CD8-positive, alpha-beta memory T cell (primary cell): ENCODE measurements at regions of chr1 and their contacts with region 1.

Region 1: GRCh38 chr1:206734499-206735142 is 36.0 kb upstream of the IL19 start:
- DNase-seq: peak; percentile 66 to 80 (median 74)
- H3K4me3 ChIP-seq: no peak overlapping the region
- H3K4me3 Mint-ChIP-seq: peak overlapping the region in 6 of 7 donors; percentile 7 to 79 (median 54)
- H3K27ac ChIP-seq: no peak overlapping the region
- H3K27ac Mint-ChIP-seq: peak overlapping the region; percentile 86 to 98 (median 92)
- H3K4me1 ChIP-seq: peaks cover 55% of the 10 kb centered on the region
- H3K4me1 Mint-ChIP-seq: peaks cover 60 to 62% (median 62%) of the 10 kb centered on the region in 3 donors
- H3K27me3 ChIP-seq: no peaks in the 10 kb centered on the region
- H3K27me3 Mint-ChIP-seq: no peaks in the 10 kb centered on the region

Region 2: DNA sequence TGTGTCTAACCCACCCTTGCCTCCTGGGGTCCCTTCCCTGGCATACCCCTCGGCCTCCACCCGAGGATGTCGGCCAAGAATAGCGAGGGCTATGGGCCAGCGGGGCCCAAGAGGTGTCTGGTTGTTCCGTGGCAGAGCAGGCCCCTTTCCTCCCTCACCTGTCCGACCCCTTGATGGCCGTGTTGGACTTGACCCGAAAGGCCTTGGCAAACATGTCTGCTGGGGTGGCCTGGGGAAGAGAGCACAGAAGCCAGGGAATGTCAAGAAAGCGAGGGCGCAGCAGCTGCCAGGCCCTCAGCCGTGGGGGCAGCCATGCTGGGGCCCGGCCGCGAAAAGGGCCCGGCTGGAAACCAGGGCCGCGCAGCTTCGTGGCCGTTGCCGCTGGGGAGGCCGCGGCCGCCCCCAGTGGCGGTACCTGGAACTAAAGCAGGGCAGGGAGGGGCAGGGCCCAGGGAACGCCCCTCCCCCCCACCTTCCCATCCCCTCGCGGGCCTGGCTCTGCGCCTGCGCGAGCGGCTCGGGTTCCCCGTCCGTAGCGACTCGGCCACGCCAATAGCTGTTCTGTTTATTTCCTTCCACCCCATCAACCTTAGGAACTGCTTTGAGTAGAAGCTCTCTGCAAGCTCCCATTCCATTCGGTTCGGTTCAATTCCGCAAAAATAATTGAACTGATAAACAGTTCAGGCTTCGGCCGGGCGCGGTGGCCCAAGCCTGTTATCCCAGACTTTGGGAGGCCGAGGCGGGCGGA is 122.3 kb before region 1 on chr1 and contains the start of gene EIF2D:
- CTCF ChIA-PET with region 1: no interaction called
- POLR2A ChIA-PET with region 1: no interaction called
- DNase-seq: peak; percentile 91 to 95 (median 92)
- H3K4me3 ChIP-seq: peak within 1 kb of the TSS; percentile 98
- H3K4me3 Mint-ChIP-seq: peak within 1 kb of the TSS; percentile 88 to 95 (median 92)
- H3K27ac ChIP-seq: peak within 1 kb of the TSS; percentile 91
- H3K27ac Mint-ChIP-seq: peak within 1 kb of the TSS; percentile 63 to 97 (median 96)
- H3K4me1 ChIP-seq: peaks cover 9% of the 10 kb centered on the region
- H3K4me1 Mint-ChIP-seq: peaks cover 14 to 26% (median 21%) of the 10 kb centered on the region in 3 donors
- H3K27me3 ChIP-seq: no peaks in the 10 kb centered on the region
- H3K27me3 Mint-ChIP-seq: no peaks in the 10 kb centered on the region
- total RNA-seq, gene EIF2D: 82.7 to 88.7 TPM

Region 3: DNA sequence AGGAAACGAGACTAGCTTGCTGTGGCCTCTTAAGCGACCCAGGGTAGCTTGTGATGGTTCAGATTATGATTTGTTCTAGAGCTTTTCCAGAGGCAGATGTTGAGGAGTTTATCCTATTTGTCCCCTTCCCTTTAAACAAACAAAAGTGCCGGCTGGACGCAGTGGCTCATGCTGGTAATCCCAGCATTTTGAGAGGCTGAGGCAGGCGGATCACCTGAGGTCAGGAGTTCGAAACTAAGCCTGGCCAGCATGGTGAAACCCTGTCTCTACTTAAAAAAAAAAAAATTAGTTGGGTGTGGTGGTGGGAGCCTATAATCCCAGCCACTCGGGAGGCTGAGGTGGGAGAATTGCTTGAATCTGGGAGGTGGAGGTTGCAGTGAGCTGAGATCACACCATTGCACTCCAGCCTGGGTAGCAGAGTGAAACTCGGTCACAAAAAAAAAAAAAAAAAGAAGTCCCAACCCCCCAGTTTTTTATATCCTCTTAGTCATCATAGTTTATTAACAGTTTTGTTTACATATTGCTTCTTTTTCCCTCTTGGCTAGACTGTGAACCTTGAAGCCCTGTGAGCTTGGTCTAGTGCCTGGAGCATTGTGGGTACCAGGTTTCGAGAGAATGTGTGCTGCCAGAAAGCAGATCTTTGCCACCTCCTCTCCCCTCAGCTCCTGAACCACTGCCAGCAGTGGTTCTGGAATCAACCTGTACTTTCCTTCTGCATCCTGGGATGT is 20.1 kb before region 1 on chr1:
- CTCF ChIA-PET with region 1: interaction called, 16 read pairs
- POLR2A ChIA-PET with region 1: interaction called, 7 read pairs
- DNase-seq: peak in 4 of 5 donors; percentile 37 to 73 (median 50)
- H3K4me3 ChIP-seq: peak overlapping the region; percentile 11
- H3K4me3 Mint-ChIP-seq: peak overlapping the region; percentile 18 to 85 (median 78)
- H3K27ac ChIP-seq: peak overlapping the region; percentile 10
- H3K27ac Mint-ChIP-seq: peak overlapping the region; percentile 79 to 100 (median 94)
- H3K4me1 ChIP-seq: peaks cover 70% of the 10 kb centered on the region
- H3K4me1 Mint-ChIP-seq: peaks cover 83 to 94% (median 92%) of the 10 kb centered on the region in 3 donors
- H3K27me3 ChIP-seq: no peaks in the 10 kb centered on the region
- H3K27me3 Mint-ChIP-seq: peaks cover 0 to 3% of the 10 kb centered on the region in 2 donors

Region 4: DNA sequence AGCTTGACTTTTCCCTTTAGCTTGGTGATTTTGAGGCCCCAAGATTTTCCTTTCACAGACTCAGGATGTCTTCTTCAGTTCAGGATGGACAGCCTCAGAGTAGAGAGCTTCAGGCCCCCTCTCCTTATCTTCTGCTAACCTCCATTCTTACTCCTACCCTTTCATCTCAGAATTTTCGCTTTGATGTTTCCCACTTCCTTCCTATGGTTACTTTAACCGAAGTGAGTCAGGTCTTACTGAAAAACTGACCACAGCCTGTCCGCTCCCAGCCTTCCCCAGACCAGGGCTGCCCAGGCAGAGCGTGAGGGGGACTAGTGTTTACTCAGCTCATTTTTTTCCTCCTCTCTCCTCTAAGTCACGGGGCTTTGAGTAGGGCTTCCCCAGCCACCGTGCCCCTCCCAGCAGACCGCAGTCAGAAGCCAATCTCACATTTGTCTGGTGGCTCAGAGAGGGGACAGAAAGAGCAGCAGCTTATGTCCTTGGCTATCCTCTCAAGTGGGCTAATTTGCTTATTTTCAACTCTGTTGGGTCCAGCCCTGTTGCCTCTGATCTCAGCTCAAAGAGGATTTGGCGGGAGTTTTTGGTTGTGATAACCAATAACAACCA is 31.7 kb after region 1 on chr1:
- CTCF ChIA-PET with region 1: interaction called, 42 read pairs
- POLR2A ChIA-PET with region 1: interaction called, 4 read pairs
- DNase-seq: peak; percentile 57 to 84 (median 73)
- H3K4me3 ChIP-seq: peak overlapping the region; percentile 7
- H3K4me3 Mint-ChIP-seq: peak overlapping the region; percentile 25 to 82 (median 63)
- H3K27ac ChIP-seq: no peak overlapping the region
- H3K27ac Mint-ChIP-seq: peak overlapping the region; percentile 21 to 98 (median 85)
- H3K4me1 ChIP-seq: peaks cover 61% of the 10 kb centered on the region
- H3K4me1 Mint-ChIP-seq: peaks cover 55 to 78% (median 75%) of the 10 kb centered on the region in 3 donors
- H3K27me3 ChIP-seq: no peaks in the 10 kb centered on the region
- H3K27me3 Mint-ChIP-seq: no peaks in the 10 kb centered on the region

Region 5: DNA sequence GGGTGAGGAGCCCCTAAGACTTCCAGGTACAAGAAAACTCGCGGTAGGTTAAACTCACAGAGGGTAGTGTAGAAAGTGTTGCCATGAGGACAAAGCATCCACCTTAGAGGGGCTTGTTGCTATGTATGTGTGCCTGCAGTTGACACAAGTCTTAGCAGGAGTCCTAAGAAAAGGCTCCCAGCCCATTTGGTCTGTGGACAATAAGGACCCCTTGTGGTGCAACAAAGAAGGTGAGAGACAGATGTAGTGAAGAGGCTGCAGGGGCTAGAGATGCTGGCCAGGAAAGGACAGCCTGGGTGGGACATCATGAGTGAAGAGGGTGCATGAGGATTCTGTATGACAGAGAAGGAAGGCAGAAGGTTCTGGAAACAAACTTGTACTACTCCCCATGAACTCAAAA is 74.0 kb after region 1 on chr1:
- CTCF ChIA-PET with region 1: interaction called, 232 read pairs
- POLR2A ChIA-PET with region 1: interaction called, 13 read pairs
- DNase-seq: peak; percentile 7 to 69 (median 67)
- H3K4me3 ChIP-seq: no peak overlapping the region
- H3K4me3 Mint-ChIP-seq: no peak overlapping the region
- H3K27ac ChIP-seq: no peak overlapping the region
- H3K27ac Mint-ChIP-seq: peak overlapping the region in 7 of 8 donors; percentile 9 to 85 (median 79)
- H3K4me1 ChIP-seq: peaks cover 38% of the 10 kb centered on the region
- H3K4me1 Mint-ChIP-seq: peaks cover 31 to 46% (median 43%) of the 10 kb centered on the region in 3 donors
- H3K27me3 ChIP-seq: no peaks in the 10 kb centered on the region
- H3K27me3 Mint-ChIP-seq: peaks cover 0 to 1% of the 10 kb centered on the region in 2 donors

Region 6: GRCh38 chr1:206905280-206906164 is 170.9 kb after region 1 on chr1:
- CTCF ChIA-PET with region 1: interaction called, 26 read pairs
- POLR2A ChIA-PET with region 1: interaction called, 6 read pairs
- DNase-seq: peak in 1 of 5 donors; percentile 63
- H3K4me3 ChIP-seq: no peak overlapping the region
- H3K4me3 Mint-ChIP-seq: peak overlapping the region; percentile 0 to 69 (median 51)
- H3K27ac ChIP-seq: no peak overlapping the region
- H3K27ac Mint-ChIP-seq: peak overlapping the region; percentile 42 to 91 (median 85)
- H3K4me1 ChIP-seq: peaks cover 70% of the 10 kb centered on the region
- H3K4me1 Mint-ChIP-seq: peaks cover 65 to 85% (median 76%) of the 10 kb centered on the region in 3 donors
- H3K27me3 ChIP-seq: no peaks in the 10 kb centered on the region
- H3K27me3 Mint-ChIP-seq: no peaks in the 10 kb centered on the region

Region 7: GRCh38 chr1:206982216-206982615 is 247.6 kb after region 1 on chr1:
- CTCF ChIA-PET with region 1: interaction called, 13 read pairs
- POLR2A ChIA-PET with region 1: no interaction called
- DNase-seq: peak; percentile 32 to 65 (median 39)
- H3K4me3 ChIP-seq: no peak overlapping the region
- H3K4me3 Mint-ChIP-seq: no peak overlapping the region
- H3K27ac ChIP-seq: no peak overlapping the region
- H3K27ac Mint-ChIP-seq: no peak overlapping the region
- H3K4me1 ChIP-seq: no peaks in the 10 kb centered on the region
- H3K4me1 Mint-ChIP-seq: no peaks in the 10 kb centered on the region
- H3K27me3 ChIP-seq: no peaks in the 10 kb centered on the region
- H3K27me3 Mint-ChIP-seq: peaks cover 20 to 25% of the 10 kb centered on the region in 2 donors